ENCODE measurements at regions of chr2 and their contacts with region 1.

Region 1: DNA sequence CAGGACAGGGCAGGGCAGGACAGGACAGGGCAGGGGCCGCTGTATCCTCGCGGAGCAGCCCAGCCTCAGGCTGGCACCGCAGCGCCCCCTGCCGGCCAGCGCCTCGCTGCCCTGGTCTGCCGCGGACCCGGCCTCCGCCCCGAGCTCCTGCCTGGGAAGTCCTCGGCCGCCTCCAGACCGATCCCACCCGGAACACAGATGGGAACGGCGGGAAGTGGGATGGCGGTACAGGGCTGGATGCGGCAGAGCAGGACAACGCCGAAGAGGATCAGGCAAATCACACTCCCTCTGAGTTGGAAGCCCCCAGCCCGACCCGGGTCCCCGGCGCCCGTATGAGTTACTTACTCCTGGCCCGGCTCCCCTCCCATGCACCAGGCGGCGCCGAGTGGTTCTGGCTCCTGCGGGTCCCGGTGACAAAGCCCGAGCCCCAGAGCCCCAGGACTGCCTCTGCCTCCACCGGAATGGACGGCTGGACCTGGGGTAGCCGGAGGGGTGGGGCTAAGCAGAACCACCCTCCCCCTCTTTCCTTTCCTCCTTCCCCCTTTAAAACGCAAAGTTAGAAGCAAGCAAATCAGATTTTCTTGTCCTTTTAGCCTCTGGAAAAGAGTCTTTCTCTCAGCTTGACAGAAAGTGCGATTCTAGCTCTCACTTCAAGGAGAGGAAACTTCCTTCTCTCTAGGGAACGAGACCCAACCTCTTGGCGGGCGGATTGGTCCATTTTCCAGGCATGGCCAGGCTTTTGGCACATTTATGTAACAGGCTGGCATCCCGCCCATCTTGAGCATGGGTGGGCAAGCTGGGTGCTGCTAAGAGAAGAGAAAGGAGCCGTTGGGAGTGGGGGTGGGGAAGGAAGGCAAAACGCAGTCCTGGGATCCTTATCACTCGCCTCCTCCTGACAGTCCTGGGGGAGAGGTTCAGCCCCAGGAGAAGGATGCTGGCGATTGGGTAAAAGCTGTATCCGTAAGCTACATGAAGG is at the start of gene TP53I3:
- DNase-seq: peak; percentile 85
- H3K4me3 Mint-ChIP-seq: peak within 1 kb of the TSS; percentile 75
- H3K27ac Mint-ChIP-seq: peak within 1 kb of the TSS; percentile 92
- H3K4me1 Mint-ChIP-seq: peaks cover 28% of the 10 kb centered on the region
- H3K27me3 Mint-ChIP-seq: no peaks in the 10 kb centered on the region
- CTCF ChIP-seq: peak; percentile 94
- total RNA-seq, gene TP53I3: 81.8 and 99.8 TPM in 2 replicates

Region 2: DNA sequence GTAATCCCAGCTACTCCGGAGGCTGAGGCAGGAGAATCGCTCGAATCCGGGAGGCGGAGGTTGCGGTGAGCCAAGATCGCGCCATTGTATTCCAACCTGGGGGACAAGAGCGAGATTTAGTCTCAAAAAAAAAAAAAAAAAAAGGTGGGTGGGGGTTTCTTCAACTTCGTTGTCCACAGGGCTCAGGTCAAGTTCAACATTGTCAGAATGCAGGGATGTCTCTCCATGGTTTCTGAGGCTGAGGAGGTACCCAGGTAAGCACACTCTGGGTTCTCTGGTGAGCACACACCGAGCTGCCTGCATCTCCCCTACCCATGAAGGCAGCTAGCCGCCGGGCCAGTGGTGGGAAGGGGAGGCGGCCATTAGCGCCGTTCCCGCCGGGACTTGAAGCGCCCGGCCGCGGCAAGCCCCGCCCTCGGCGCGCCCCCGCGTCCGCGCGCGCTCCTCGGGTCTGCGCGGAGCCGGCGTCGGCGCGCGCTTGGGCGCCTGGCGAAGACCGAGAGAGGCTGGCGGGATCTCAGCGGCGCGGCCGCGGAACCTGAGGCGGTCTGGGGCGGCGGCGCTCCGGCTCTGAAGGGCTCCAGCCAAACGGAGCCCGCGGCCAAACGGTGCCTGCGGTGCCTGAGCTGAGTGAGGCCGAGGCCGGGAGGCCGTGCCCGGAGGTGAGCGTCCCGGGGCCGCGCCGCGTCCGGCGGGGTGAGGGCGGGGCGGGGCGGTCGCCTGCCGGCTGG is 144.5 kb before region 1 on chr2 and contains the start of gene UBXN2A:
- CTCF ChIA-PET with region 1: interaction called, 12 read pairs
- POLR2A ChIA-PET with region 1: interaction called, 11 read pairs
- intact Hi-C with region 1: loop called (anchors 5 kb)
- DNase-seq: peak; percentile 75
- H3K4me3 Mint-ChIP-seq: peak within 1 kb of the TSS; percentile 76
- H3K27ac Mint-ChIP-seq: peak within 1 kb of the TSS; percentile 30
- H3K4me1 Mint-ChIP-seq: peaks cover 25% of the 10 kb centered on the region
- H3K27me3 Mint-ChIP-seq: no peaks in the 10 kb centered on the region
- CTCF ChIP-seq: no peak
- total RNA-seq, gene UBXN2A: 13.0 and 13.6 TPM in 2 replicates

Region 3: DNA sequence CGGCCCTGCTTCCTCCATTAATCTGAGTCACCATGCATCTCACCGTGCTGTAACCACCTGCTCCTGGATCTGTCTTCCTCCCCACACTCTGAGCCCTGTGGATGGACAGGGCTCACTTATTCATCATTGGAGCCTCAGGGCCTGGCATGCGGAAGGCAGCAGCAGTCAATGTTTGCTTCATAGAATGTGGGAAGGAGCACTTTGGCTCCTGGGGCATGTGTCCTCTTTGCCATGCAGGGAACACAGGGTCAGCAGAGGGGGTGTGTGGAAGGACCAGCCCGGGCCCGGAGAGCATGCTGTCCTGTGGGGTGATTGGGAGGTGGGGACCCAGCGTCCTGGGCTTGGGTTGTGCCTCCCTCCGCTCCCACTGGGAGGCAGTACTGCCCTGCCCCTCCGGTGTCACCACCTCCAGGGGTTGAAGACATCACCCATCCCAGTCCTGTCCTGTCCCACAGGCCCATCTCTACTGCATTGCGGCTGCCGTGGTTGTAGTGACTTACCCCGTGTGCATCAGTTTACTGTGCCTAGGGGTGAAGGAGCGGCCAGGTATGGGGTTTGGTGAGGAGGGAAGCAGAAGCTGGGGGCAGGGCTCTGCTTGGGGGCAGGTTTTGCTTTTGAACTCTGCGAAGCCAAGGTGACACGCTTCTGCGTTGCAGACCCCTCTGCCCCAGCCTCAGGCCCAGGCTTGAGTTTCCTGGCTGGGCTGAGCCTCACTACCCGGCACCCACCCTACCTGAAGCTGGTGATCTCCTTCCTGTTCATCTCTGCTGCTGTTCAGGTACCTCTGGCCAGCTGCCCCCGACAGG is 63.3 kb before region 1 on chr2:
- CTCF ChIA-PET with region 1: no interaction called
- POLR2A ChIA-PET with region 1: interaction called, 9 read pairs
- intact Hi-C with region 1: loop called (anchors 1 kb)
- DNase-seq: peak; percentile 79
- H3K4me3 Mint-ChIP-seq: no peak overlapping the region
- H3K27ac Mint-ChIP-seq: peak overlapping the region; percentile 38
- H3K4me1 Mint-ChIP-seq: peaks cover 13% of the 10 kb centered on the region
- H3K27me3 Mint-ChIP-seq: no peaks in the 10 kb centered on the region
- CTCF ChIP-seq: peak; percentile 51

Region 4: GRCh38 chr2:24123195-24123921 is 38.7 kb after region 1 on chr2 and contains the starts of genes FAM228B and PFN4:
- CTCF ChIA-PET with region 1: interaction called, 20 read pairs
- POLR2A ChIA-PET with region 1: interaction called, 57 read pairs
- intact Hi-C with region 1: loop called (anchors 1 kb)
- DNase-seq: peak; percentile 77
- H3K4me3 Mint-ChIP-seq: peak within 1 kb of the TSS; percentile 79
- H3K27ac Mint-ChIP-seq: peak within 1 kb of the TSS; percentile 81
- H3K4me1 Mint-ChIP-seq: peaks cover 16% of the 10 kb centered on the region
- H3K27me3 Mint-ChIP-seq: no peaks in the 10 kb centered on the region
- CTCF ChIP-seq: no peak
- total RNA-seq, gene FAM228B: 10.6 and 19.5 TPM in 2 replicates
- total RNA-seq, gene PFN4: 1.8 and 2.6 TPM in 2 replicates

Region 5: GRCh38 chr2:24253303-24253919 is 168.7 kb after region 1 on chr2:
- CTCF ChIA-PET with region 1: no interaction called
- POLR2A ChIA-PET with region 1: no interaction called
- intact Hi-C with region 1: no loop called
- DNase-seq: peak; percentile 38
- H3K4me3 Mint-ChIP-seq: no peak overlapping the region
- H3K27ac Mint-ChIP-seq: no peak overlapping the region
- H3K4me1 Mint-ChIP-seq: peaks cover 6% of the 10 kb centered on the region
- H3K27me3 Mint-ChIP-seq: no peaks in the 10 kb centered on the region
- CTCF ChIP-seq: no peak

Region 6: DNA sequence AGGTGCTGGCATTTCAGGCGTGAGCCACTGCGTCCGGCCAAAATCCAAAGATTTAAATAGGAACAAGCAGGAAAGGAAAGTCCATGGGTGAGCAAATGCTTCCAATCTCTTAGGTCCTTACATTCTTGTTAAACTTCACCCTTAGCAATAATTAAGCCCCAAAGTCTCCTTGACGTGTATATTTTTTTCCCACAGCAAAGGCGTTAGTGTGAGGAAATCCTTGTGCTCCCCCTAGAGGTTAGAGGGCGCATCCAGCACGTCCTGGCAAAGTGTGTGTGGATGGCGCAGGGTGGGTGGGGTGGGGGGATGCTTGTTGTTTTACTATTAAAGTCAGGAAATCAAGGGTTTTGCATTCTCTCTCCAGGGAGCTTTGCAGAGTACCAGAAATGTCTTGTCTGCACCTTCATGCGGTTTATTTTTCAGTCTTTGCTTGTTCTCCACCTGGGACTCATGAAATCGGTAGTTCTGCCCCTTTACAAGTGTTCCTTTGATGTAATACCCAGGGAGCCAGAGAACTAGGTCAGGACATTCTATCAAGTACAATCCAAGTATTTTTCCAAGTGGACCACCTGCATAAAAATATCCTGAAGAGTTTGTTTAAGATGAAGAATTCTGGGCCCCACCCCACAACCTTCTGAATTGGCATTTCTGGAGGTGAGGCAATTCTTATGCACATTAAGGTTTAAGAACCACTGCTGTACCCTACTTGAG is 297.8 kb after region 1 on chr2:
- CTCF ChIA-PET with region 1: interaction called, 8 read pairs
- POLR2A ChIA-PET with region 1: no interaction called
- intact Hi-C with region 1: loop called (anchors 1 kb)
- DNase-seq: peak; percentile 76
- H3K4me3 Mint-ChIP-seq: no peak overlapping the region
- H3K27ac Mint-ChIP-seq: no peak overlapping the region
- H3K4me1 Mint-ChIP-seq: peaks cover 10% of the 10 kb centered on the region
- H3K27me3 Mint-ChIP-seq: no peaks in the 10 kb centered on the region
- CTCF ChIP-seq: peak; percentile 68

Measured in MCF 10A (cell line).